Posterior cingulate gyrus (tissue), 11 donors: ENCODE measurements at regions of chr16 and their contacts with region 1.

Region 1: DNA sequence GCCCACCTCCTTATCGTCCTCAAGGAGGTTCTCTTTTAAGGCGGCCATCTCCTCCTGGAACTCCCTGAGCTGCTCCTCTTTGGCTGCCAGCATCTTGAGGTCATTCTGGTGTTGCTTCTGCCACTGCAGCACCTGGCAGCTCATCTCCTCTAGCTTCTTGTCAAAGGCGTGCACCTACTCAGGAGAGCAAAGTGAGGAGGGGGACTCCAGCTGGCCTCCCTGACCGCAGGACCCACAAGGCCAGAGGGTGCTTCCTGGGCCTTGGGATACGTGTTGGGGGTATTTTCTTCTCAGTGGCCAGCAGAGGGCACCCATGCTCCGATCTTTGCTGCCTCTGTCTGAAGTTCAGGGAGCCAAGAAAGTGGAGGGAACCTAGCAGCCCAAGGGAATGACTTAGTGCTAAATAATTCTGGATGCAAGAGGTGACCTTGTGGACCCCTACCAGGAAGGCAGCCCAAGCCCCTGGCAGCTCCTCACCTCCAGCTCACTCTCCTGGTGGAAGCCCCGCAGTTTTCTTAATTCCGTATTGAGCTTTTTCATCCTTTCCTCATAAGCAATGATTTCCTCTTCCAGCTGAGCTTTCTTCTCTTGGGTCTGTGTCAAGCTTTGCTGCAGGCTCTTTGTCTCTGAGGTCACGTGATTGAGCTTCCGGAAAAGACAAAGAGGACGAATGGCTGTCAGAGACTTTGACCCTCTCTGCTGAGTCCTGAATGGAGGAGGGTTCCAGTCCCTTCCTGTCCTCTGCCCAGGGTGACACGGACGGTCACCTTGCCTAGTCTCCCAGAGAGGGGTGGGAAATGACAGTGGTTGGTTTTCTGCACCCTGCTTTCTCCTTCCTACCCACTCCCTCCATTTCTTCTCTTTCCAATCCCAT is 31.4 kb downstream of the DHX38 start:
- DNase-seq: peak; percentile 46 to 96 (median 81)

Region 2: GRCh38 chr16:72203401-72203800 is 78.4 kb after region 1 on chr16:
- intact Hi-C with region 1: loop called (anchors 5 kb)
- DNase-seq: no peak

Region 3: GRCh38 chr16:72400257-72400882 is 275.4 kb after region 1 on chr16:
- intact Hi-C with region 1: loop called (anchors 10 kb)
- DNase-seq: peak in 4 of 10 donors; percentile 6 to 60 (median 30)

Region 4: DNA sequence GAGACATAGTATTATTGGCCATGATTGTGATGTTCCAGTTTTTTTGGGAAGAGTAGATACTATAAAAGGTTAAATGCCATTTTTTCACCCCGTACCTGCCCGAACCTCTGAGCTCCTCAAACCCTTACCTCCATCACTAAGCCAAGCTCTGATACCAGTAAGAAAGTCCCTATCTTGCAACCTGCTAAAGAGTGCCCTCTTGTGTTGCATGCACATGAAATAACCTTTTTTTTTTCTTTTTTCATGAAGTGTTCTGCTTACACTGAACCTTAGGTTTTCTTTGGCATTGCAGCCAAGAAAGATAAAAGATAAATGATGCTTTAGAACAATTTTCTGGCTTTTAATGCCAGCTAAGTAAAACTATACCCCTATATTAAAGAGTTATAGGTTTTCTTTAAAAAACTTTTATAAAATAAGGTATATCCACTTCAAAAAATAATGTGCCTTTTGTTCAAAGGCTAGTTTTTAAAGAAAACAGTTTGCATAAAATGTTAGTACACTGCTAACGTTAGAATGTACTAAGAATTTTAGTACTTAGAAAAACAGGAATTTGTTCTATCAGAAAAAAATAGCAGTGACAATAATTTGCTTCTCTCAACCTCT is 342.3 kb after region 1 on chr16:
- intact Hi-C with region 1: loop called (anchors 1 kb)
- DNase-seq: no peak

Region 5: DNA sequence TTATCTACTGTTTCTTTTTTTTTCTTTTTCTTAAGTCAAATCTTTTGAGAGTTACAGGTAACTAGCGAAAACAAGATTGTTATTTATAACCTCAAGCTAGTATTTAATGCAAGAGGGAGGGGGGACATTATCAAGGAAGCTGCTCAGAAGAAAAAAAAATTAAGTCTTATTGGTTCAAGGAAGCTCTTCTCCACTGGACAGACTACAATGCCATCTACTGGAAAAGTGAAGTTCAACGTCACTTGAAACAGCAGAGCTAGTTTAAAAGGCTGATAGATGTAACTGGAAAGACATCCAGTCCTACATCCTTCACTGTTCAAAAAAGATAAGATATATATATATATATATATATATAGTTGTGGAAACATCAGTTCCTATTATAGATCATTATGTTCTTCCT is 1753.6 kb after region 1 on chr16:
- intact Hi-C with region 1: loop called (anchors 10 kb)
- DNase-seq: peak in 1 of 10 donors; percentile 12